Adrenal gland (tissue), 19 donors: ENCODE measurements at regions of chr14 and their contacts with region 1.

Region 1: DNA sequence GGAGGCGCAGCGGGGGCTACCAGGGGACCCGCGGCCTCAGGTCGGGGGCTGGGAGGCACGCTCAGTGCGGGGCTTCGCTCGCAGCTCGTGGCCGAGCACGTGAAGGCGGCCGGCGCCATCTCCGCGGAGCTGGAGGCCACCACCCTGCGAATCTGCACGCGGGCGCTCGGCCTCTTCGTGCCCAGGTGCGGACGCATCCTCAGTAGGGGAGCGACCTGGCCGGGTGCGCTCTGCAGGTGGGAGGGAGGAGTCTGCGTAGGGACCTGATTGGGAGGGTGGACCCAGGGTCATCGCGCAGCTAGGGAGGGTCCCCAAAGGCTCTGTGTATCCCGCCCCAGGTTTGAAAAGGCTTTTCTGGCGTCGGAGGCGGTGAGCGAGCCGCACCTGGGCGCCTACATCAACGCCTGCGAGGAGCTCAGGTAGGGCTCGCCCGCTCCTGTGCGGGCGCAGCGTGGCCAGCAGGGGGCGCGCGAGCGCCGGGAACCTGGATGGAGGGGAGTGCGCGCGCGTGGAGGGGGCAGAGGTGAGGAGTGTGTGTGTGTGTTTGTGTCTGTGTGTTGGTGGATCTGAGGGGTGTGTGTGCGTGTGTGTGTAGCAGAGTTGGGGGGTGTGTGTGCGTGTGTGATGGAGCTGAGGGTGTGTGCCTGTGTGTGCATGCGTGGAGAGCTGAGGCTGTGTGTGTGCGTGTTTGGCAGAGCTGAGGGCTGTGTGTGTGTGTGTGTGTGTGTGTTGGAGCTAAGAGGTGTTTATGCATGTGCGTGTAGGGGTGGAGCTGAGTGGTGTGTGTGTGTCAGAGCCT is 10.3 kb downstream of the EXOC3L4 start:
- DNase-seq: peak in 6 of 7 donors; percentile 57 to 73 (median 68)
- H3K4me3 ChIP-seq: no peak overlapping the region
- H3K27ac ChIP-seq: no peak overlapping the region
- H3K4me1 ChIP-seq: peaks cover 11 to 19% of the 10 kb centered on the region in 2 donors
- H3K27me3 ChIP-seq: peaks cover 17% of the 10 kb centered on the region
- CTCF ChIP-seq: peak; percentile 90 to 98 (median 96)
- POLR2A ChIP-seq: no peak

Region 2: DNA sequence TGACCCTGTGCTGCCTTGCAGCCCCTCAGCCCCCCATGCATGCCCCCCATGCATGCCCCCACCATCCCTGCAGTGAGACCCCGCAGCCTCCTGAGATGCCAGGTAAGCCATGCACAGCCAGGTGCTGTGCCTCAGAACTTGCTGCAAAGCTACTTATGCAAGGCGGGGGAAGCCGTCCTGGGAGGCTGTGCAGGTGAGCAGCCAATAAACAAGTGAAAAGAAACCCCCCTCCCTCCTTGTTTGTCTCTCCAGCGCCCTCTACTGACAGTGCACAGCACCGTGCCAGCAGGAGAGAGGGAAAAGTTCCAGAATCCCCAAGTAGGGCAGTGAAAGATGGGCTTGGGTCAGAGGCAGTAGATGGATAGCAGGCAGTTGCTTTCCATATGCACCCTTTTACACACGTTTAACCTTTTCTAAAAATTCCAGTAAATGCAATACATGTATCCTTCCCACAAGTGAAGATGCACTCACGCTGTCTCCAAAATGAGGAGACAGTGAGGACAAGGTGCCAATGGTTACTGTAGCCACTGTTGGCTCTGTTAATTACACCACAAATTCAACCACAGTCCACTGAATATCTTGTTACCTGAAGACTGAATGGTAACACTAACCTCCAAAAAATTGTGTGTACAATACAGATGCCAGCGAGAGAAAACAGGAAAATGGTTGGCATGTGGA is 36.4 kb after region 1 on chr14:
- intact Hi-C with region 1: loop called in 1 of 2 experiments (anchors 2 kb)
- DNase-seq: peak in 6 of 7 donors; percentile 48 to 73 (median 70)
- H3K4me3 ChIP-seq: no peak overlapping the region
- H3K27ac ChIP-seq: no peak overlapping the region
- H3K4me1 ChIP-seq: peaks cover 6 to 8% of the 10 kb centered on the region in 2 donors
- H3K27me3 ChIP-seq: no peaks in the 10 kb centered on the region
- CTCF ChIP-seq: peak; percentile 48 to 76 (median 67)
- POLR2A ChIP-seq: no peak

Region 3: GRCh38 chr14:103185051-103185992 is 80.5 kb after region 1 on chr14:
- intact Hi-C with region 1: loop called (anchors 2 to 5 kb)
- DNase-seq: no peak
- H3K4me3 ChIP-seq: no peak overlapping the region
- H3K27ac ChIP-seq: no peak overlapping the region
- H3K4me1 ChIP-seq: peaks cover 8 to 9% of the 10 kb centered on the region in 2 donors
- H3K27me3 ChIP-seq: no peaks in the 10 kb centered on the region
- CTCF ChIP-seq: peak; percentile 56 to 85 (median 74)
- POLR2A ChIP-seq: no peak